Heart left ventricle (tissue), 16 donors: ENCODE measurements at regions of chr3 and their contacts with region 1.

Region 1: DNA sequence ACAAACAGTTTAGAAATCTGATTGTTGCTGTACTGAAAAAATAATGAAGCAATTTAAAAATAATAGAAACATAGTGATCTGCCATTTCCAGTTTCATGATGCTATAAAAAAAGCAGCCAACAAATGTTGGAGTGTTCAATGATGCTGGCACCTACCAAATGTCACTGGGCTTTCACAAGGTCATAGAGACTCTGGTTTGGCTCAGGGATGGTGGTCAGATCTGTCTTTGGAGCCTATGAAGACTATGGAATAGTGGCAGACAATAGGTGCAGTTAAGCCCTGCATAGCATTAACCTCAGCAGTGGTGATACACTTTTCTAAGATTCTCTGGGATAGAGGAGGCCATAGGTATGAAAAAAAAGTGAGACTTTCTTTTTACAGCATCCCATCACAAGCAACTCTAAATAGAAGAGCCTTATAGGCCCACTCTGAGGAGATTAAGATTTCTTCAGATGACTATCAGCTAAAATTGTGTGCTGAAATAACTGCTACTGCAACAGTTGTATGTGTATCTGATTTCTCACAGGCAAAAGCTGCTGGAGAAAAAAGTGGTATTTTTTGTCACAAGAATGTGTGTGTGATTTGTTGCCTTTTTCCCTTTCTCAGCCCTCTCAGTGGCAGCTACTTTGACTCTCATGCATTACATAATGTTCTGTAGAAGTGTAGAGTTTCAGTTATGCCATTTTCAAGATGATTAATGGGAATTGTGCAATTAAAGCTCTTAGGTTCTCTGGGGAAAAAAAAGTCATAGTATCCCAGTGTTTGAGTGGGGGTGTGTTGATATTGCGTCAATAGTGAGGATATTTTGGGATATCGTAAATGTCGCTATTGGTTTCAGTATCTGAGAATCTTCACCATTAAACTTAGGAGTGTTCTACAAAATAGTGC is 137.4 kb downstream of the MBNL1 start:
- DNase-seq: peak in 1 of 5 donors; percentile 36
- ATAC-seq: peak in 3 of 4 donors; percentile 30 to 64 (median 58)
- H3K4me3 ChIP-seq: peak overlapping the region in 3 of 12 donors; percentile 17 to 25 (median 20)
- H3K27ac ChIP-seq: peak overlapping the region; percentile 68 to 94 (median 84)
- H3K4me1 ChIP-seq: peaks cover 7 to 80% (median 63%) of the 10 kb centered on the region in 12 donors
- H3K27me3 ChIP-seq: no peaks in the 10 kb centered on the region
- CTCF ChIP-seq: no peak
- POLR2A ChIP-seq: no peak

Region 2: GRCh38 chr3:152322756-152323155 is 83.4 kb before region 1 on chr3:
- intact Hi-C with region 1: no loop called
- DNase-seq: no peak
- ATAC-seq: peak in 2 of 4 donors; percentile 25 to 32
- H3K4me3 ChIP-seq: no peak overlapping the region
- H3K27ac ChIP-seq: peak overlapping the region in 10 of 12 donors; percentile 22 to 78 (median 60)
- H3K4me1 ChIP-seq: peaks cover 0 to 86% (median 70%) of the 10 kb centered on the region in 12 donors
- H3K27me3 ChIP-seq: no peaks in the 10 kb centered on the region
- CTCF ChIP-seq: no peak
- POLR2A ChIP-seq: no peak

Region 3: GRCh38 chr3:152430223-152431002 is 24.3 kb after region 1 on chr3:
- intact Hi-C with region 1: loop called in 1 of 10 experiments (anchors 1 kb)
- DNase-seq: peak in 4 of 5 donors; percentile 39 to 78 (median 62)
- ATAC-seq: peak; percentile 89 to 98 (median 93)
- H3K4me3 ChIP-seq: no peak overlapping the region
- H3K27ac ChIP-seq: peak overlapping the region in 11 of 12 donors; percentile 27 to 72 (median 60)
- H3K4me1 ChIP-seq: peaks cover 0 to 64% (median 29%) of the 10 kb centered on the region in 12 donors
- H3K27me3 ChIP-seq: no peaks in the 10 kb centered on the region
- CTCF ChIP-seq: no peak
- POLR2A ChIP-seq: no peak